B cell (primary cell): ENCODE measurements at regions of chr5 and their contacts with region 1.

Region 1: DNA sequence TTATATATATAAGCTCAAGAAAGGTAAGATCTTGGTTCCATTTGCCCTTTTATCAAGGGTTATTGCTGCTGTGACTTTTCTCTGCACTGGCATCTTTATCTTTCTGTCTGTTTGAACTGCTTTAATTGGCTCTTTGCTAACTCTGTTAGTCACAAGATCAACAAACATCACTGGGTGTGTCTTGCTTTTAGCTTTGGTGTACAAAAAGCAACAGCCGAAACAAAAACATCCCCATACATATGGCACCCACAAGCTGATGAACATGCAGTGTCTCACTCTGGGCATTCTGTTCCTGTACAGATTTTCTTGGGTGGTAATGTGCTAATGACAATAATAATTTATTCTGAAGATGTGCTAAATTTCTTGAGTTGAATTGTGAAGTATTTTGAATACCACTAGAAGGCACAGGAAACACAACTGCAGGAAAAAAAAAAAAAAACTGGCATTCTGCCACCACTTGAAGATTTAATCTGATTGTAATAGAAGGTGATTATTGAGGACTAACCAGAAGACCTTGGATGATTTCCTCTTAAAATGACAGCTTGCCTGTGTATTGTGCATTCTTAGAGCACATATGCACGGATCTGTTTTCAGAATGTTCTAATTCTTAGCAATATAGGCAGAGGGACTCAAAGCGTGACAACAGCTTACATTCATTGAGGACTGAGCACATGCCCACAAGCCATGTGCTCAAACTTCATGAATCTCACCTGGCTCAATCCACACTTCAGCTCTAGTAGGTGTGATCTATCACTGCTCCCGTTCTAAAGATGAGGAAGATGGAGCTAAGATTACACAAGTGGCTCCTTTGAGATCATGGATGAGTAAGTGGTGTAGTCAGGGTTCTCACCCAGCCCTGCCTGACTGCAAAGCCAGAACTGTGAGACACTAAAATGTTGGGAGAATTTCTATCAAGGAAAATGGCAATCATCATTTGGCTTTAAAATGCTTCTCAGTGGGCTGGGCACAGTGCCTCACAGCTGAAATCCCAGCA is 96.4 kb downstream of the EBF1 start:
- DNase-seq: no peak
- ATAC-seq: no peak
- H3K4me3 ChIP-seq: no peak overlapping the region
- H3K4me3 Mint-ChIP-seq: peak overlapping the region; percentile 1
- H3K27ac ChIP-seq: peak overlapping the region in 1 of 2 donors; percentile 32
- H3K27ac Mint-ChIP-seq: peak overlapping the region; percentile 11
- H3K4me1 ChIP-seq: peaks cover 35 to 55% of the 10 kb centered on the region in 2 donors
- H3K4me1 Mint-ChIP-seq: peaks cover 82% of the 10 kb centered on the region
- H3K27me3 ChIP-seq: no peaks in the 10 kb centered on the region
- H3K27me3 Mint-ChIP-seq: no peaks in the 10 kb centered on the region
- CTCF ChIP-seq: no peak

Region 2: GRCh38 chr5:158967541-158967940 is 35.8 kb before region 1 on chr5:
- CTCF ChIA-PET with region 1: no interaction called
- POLR2A ChIA-PET with region 1: no interaction called
- intact Hi-C with region 1: loop called (anchors 5 kb)
- DNase-seq: peak; percentile 22
- ATAC-seq: peak; percentile 41
- H3K4me3 ChIP-seq: no peak overlapping the region
- H3K4me3 Mint-ChIP-seq: peak overlapping the region; percentile 7
- H3K27ac ChIP-seq: no peak overlapping the region
- H3K27ac Mint-ChIP-seq: peak overlapping the region; percentile 26
- H3K4me1 ChIP-seq: peaks cover 19 to 28% of the 10 kb centered on the region in 2 donors
- H3K4me1 Mint-ChIP-seq: peaks cover 70% of the 10 kb centered on the region
- H3K27me3 ChIP-seq: no peaks in the 10 kb centered on the region
- H3K27me3 Mint-ChIP-seq: no peaks in the 10 kb centered on the region
- CTCF ChIP-seq: no peak

Region 3: DNA sequence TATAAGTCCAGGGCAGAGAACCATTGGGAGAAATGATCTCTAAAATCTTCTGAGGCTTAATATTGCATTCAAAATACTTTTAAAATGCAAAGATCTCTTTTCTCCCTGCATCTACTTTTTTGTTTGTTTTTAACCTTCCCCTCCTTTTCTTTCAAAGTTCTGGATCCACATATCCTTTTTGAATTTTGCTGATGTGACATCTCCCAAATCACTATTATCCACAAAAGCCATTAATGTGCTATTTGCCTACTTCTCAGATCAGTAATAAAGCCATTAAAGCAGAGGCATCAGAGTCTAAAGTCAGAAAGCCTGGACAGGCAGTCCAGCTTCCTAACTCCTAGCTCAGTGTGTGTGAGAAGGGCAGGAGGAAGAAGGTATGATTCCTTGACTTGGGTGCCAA is 17.8 kb before region 1 on chr5:
- CTCF ChIA-PET with region 1: no interaction called
- POLR2A ChIA-PET with region 1: no interaction called
- intact Hi-C with region 1: loop called (anchors 2 kb)
- DNase-seq: no peak
- ATAC-seq: no peak
- H3K4me3 ChIP-seq: no peak overlapping the region
- H3K4me3 Mint-ChIP-seq: no peak overlapping the region
- H3K27ac ChIP-seq: no peak overlapping the region
- H3K27ac Mint-ChIP-seq: no peak overlapping the region
- H3K4me1 ChIP-seq: peaks cover 3 to 5% of the 10 kb centered on the region in 2 donors
- H3K4me1 Mint-ChIP-seq: peaks cover 75% of the 10 kb centered on the region
- H3K27me3 ChIP-seq: no peaks in the 10 kb centered on the region
- H3K27me3 Mint-ChIP-seq: no peaks in the 10 kb centered on the region
- CTCF ChIP-seq: no peak

Region 4: DNA sequence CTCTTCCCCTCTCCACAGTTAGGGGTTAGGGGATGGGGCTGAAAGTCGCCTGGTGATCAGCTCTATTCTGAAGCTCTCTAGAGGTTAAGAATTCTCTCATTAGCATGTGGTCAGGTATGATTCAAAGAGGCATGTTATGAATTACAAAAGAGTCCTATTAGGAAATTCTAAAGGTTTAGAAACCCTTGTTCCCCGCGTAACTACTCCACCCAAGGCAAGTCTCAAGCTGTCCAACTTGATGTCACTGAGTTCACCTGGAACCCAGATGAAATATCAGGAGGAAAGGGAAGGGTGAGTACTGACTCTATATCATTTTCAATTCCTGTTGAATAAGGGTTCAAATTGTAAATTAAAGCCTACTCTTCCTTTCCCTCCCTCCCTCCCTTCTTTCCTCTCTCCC is 224.1 kb after region 1 on chr5:
- CTCF ChIA-PET with region 1: no interaction called
- POLR2A ChIA-PET with region 1: no interaction called
- intact Hi-C with region 1: no loop called
- DNase-seq: no peak
- ATAC-seq: no peak
- H3K4me3 ChIP-seq: no peak overlapping the region
- H3K4me3 Mint-ChIP-seq: no peak overlapping the region
- H3K27ac ChIP-seq: no peak overlapping the region
- H3K27ac Mint-ChIP-seq: no peak overlapping the region
- H3K4me1 ChIP-seq: no peaks in the 10 kb centered on the region
- H3K4me1 Mint-ChIP-seq: no peaks in the 10 kb centered on the region
- H3K27me3 ChIP-seq: no peaks in the 10 kb centered on the region
- H3K27me3 Mint-ChIP-seq: peaks cover 15% of the 10 kb centered on the region
- CTCF ChIP-seq: no peak